H1 (cell line): ENCODE measurements at regions of chr11 and their contacts with region 1.

Region 1: DNA sequence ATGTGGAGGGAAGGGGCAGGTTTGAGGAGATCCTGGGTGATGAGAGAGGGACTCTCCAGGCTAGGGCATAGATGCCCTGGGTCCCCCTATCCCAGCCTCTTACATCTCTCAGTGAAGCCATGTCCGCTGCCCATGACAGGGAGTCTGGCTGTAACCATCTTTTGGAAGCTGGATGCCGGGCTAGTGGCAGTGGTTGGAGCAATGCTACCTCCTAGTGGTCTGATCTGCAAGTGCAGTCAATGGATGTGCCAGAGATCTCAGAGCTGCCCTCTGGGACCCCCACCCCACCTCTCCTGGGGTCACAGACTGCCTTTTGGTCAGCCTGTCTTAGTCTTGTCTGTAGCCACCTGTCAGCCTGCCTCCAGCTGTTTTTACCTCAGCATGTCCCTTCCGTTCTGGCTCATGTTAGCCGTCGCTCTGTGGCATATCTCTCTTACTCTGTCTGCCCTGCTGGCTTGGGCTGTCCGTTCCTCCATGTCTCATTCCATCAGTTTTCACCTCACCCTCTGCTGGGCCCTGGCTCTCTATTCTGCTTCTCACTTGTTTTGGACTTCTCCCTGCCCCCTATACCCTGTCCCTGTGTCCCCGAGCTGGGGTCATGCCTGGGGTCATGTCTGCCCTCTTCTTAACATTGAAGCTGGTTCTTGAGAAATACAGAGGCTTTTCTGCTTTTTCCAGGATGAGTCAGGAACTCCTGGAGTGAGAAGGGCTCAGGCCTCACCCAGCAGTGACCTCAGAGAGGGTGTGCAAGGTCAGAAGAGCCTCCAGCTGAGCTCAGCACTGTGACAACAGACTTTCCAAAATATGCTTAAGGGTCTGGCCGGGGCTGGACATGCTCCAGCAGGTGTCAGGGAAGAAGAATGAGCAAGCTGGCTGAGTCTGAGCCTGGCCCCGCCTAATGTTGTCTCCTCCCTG is 52.0 kb upstream of the THY1 start:
- DNase-seq: peak in 1 of 2 experiments; percentile 91
- H3K4me3 ChIP-seq: no peak overlapping the region
- H3K27ac ChIP-seq: no peak overlapping the region
- H3K4me1 ChIP-seq: peaks cover 0 to 13% (median under 1%) of the 10 kb centered on the region in 4 experiments; a peak in 5 of 7 replicates
- H3K27me3 ChIP-seq: no peaks in the 10 kb centered on the region; a peak in 2 of 7 replicates
- CTCF ChIP-seq: peak; percentile 83 to 95 (median 95)
- EP300 ChIP-seq: no peak
- POLR2A ChIP-seq: no peak
- RAD21 ChIP-seq: peak; percentile 98 to 99

Region 2: GRCh38 chr11:119347242-119347641 is 127.7 kb before region 1 on chr11:
- CTCF ChIA-PET with region 1: interaction called, 25 read pairs
- POLR2A ChIA-PET with region 1: no interaction called
- DNase-seq: no peak
- H3K4me3 ChIP-seq: no peak overlapping the region
- H3K27ac ChIP-seq: no peak overlapping the region
- H3K4me1 ChIP-seq: no peaks in the 10 kb centered on the region; a peak in 2 of 7 replicates
- H3K27me3 ChIP-seq: peaks cover 0 to 10% (median 1%) of the 10 kb centered on the region in 4 experiments; a peak in 3 of 7 replicates
- CTCF ChIP-seq: no peak
- EP300 ChIP-seq: no peak
- POLR2A ChIP-seq: no peak
- RAD21 ChIP-seq: no peak

Region 3: DNA sequence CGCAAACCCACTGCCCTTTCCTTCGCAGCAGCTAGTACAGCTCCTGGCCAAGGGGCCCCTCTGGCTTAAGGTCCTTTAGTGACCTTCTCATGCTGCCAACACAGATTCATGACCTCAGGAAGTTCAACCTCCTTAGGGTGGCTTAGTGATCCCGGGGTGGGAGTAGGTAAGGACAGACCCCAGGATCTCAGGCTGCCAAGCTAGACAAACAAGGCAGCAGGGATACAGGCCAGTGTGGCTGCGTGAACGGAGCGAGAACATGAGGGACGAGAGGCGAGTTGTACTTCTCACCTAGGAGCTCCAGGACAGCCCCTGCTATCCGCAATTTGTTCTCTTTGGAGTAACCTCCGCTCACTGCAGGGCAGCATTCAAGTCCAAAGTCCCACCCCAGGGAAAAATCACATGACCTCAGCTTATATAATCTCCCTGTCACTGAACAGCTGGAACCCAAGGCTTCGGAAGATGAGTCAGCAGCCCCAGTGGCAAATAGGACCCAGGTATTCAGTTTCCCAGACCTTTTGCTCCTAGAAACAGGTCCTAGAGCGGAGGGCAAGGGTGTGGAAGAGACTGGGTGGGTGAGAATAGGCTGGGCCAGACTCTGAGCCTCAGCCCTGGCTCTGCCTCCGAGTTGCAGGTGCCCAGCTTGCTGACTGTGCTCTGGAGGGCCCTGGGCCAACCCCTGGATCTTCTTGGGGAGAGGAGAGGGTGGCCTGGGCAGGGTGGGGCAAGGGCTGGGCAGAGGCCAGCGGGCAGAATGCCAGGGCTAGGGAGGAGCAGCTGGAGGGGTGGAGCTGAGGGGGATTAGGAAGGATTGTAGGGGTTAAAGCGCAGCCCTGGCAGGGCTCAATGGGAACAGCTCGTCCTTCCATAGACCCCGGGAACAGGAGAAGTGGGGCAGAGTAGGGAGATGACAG is 106.6 kb before region 1 on chr11:
- CTCF ChIA-PET with region 1: interaction called, 336 read pairs
- POLR2A ChIA-PET with region 1: no interaction called
- DNase-seq: no peak
- H3K4me3 ChIP-seq: no peak overlapping the region
- H3K27ac ChIP-seq: no peak overlapping the region
- H3K4me1 ChIP-seq: peaks cover 0 to 18% (median 13%) of the 10 kb centered on the region in 4 experiments; a peak in 6 of 7 replicates
- H3K27me3 ChIP-seq: peaks cover 9 to 23% (median 21%) of the 10 kb centered on the region in 4 experiments
- CTCF ChIP-seq: no peak
- EP300 ChIP-seq: no peak
- POLR2A ChIP-seq: no peak
- RAD21 ChIP-seq: no peak

Region 4: GRCh38 chr11:119421941-119422808 is 52.8 kb before region 1 on chr11:
- CTCF ChIA-PET with region 1: interaction called, 11 read pairs
- POLR2A ChIA-PET with region 1: interaction called, 9 read pairs
- DNase-seq: no peak
- H3K4me3 ChIP-seq: peak overlapping the region; percentile 76 to 91 (median 90)
- H3K27ac ChIP-seq: peak overlapping the region; percentile 43
- H3K4me1 ChIP-seq: peaks cover 20 to 40% (median 27%) of the 10 kb centered on the region in 4 experiments
- H3K27me3 ChIP-seq: no peaks in the 10 kb centered on the region; a peak in 1 of 7 replicates
- CTCF ChIP-seq: no peak
- EP300 ChIP-seq: no peak
- POLR2A ChIP-seq: peak in 1 of 2 experiments; percentile 37; a peak in 1 of 3 replicates
- RAD21 ChIP-seq: no peak

Region 5: GRCh38 chr11:119445850-119446249 is 29.1 kb before region 1 on chr11:
- CTCF ChIA-PET with region 1: interaction called, 12 read pairs
- POLR2A ChIA-PET with region 1: no interaction called
- DNase-seq: no peak
- H3K4me3 ChIP-seq: no peak overlapping the region
- H3K27ac ChIP-seq: no peak overlapping the region
- H3K4me1 ChIP-seq: peaks cover 0 to 6% (median 1%) of the 10 kb centered on the region in 4 experiments; a peak in 1 of 7 replicates
- H3K27me3 ChIP-seq: 0 out of 7 replicates have a peak, but pooled peaks cover 0 to 3% (median 0%) of the 10 kb centered on the region in 4 experiments
- CTCF ChIP-seq: no peak
- EP300 ChIP-seq: no peak
- POLR2A ChIP-seq: no peak
- RAD21 ChIP-seq: no peak

Region 6: DNA sequence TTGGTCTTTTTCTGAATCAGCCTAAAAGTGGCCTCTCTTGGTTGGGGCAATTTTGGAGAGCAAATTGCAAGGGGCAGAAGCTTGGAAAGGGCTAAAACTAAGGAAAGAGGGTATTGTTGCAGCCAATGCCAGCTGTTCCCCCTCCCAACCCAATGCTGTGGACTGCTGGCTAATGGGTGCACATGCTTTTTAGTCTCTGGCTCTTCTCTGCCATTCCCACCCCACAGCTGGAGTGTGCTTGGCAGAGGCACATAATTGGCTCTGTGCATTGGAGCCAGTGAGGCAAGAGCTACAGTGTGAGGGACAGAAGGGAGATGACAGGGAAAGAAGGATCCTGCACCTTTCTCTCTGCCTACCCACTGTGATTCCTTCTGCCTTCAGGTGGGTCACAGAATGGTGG is 114.1 kb after region 1 on chr11:
- CTCF ChIA-PET with region 1: no interaction called
- POLR2A ChIA-PET with region 1: no interaction called
- DNase-seq: no peak
- H3K4me3 ChIP-seq: no peak overlapping the region
- H3K27ac ChIP-seq: no peak overlapping the region
- H3K4me1 ChIP-seq: peaks cover 3 to 22% (median 14%) of the 10 kb centered on the region in 4 experiments
- H3K27me3 ChIP-seq: peaks cover 0 to 18% (median 7%) of the 10 kb centered on the region in 4 experiments; a peak in 4 of 7 replicates
- CTCF ChIP-seq: no peak
- EP300 ChIP-seq: no peak
- POLR2A ChIP-seq: no peak
- RAD21 ChIP-seq: no peak

Region 7: GRCh38 chr11:119610836-119611426 is 136.0 kb after region 1 on chr11:
- CTCF ChIA-PET with region 1: no interaction called
- POLR2A ChIA-PET with region 1: no interaction called
- DNase-seq: no peak
- H3K4me3 ChIP-seq: no peak overlapping the region
- H3K27ac ChIP-seq: no peak overlapping the region
- H3K4me1 ChIP-seq: peaks cover 3 to 19% (median 10%) of the 10 kb centered on the region in 4 experiments; a peak in 6 of 7 replicates
- H3K27me3 ChIP-seq: peaks cover 0 to 5% (median 0%) of the 10 kb centered on the region in 4 experiments; a peak in 4 of 7 replicates
- CTCF ChIP-seq: no peak
- EP300 ChIP-seq: no peak
- POLR2A ChIP-seq: no peak
- RAD21 ChIP-seq: no peak